ENCODE measurements at regions of chr3 and their contacts with region 1.

Region 1: GRCh38 chr3:138974462-138974861 is 27.4 kb downstream of the FOXL2NB start:
- DNase-seq: peak; percentile 34
- H3K4me3 ChIP-seq: no peak overlapping the region
- H3K27ac ChIP-seq: no peak overlapping the region
- H3K4me1 ChIP-seq: no peaks in the 10 kb centered on the region
- H3K27me3 ChIP-seq: no peaks in the 10 kb centered on the region
- CTCF ChIP-seq: no peak

Region 2: DNA sequence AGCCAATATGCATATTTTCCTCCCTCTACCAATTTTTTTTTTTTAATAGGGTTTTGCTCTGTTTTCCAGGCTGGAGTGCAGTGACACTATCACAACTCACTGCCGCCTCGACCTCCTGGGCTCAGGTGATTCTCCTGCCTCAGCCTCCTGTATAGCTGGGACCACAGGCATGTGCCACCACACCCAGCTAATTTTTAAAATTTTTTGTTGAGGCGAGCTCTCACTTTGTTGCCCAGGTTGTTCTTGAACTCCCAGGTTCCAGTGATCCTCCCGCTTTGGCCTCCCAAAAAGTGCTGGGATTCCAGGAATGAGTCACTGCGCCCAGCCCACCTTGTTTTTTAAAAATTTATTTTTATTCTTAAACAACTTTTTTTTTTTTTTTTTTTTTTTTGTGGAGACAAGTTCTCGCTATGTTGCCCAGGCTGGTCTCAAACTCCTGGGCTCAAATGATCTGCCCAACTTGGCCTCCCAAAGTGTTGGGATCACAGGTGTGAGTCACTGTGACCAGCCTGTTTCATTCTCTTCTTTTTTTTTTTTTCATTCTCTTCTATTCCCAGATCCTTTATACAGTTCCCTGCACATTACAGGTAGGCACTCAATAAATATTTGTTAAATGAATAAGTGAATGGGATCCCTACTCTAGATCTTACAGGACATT is 99.2 kb before region 1 on chr3:
- CTCF ChIA-PET with region 1: interaction called, 34 read pairs
- dilution Hi-C with region 1: no loop called
- in situ Hi-C with region 1: no loop called
- intact Hi-C with region 1: no loop called
- DNase-seq: no peak
- H3K4me3 ChIP-seq: no peak overlapping the region
- H3K27ac ChIP-seq: no peak overlapping the region
- H3K4me1 ChIP-seq: peaks cover 11% of the 10 kb centered on the region
- H3K27me3 ChIP-seq: no peaks in the 10 kb centered on the region
- CTCF ChIP-seq: no peak